ENCODE measurements at regions of chr12 and their contacts with region 1.

Region 1: GRCh38 chr12:101299931-101300330 is 20.0 kb downstream of the UTP20 start:
- DNase-seq: no peak
- ATAC-seq: no peak
- H3K4me3 ChIP-seq: no peak overlapping the region
- H3K27ac ChIP-seq: no peak overlapping the region
- H3K4me1 ChIP-seq: no peaks in the 10 kb centered on the region
- H3K27me3 ChIP-seq: no peaks in the 10 kb centered on the region
- CTCF ChIP-seq: no peak

Region 2: GRCh38 chr12:101356794-101357193 is 56.9 kb after region 1 on chr12:
- intact Hi-C with region 1: loop called (anchors 10 kb)
- DNase-seq: no peak
- ATAC-seq: no peak
- H3K4me3 ChIP-seq: no peak overlapping the region
- H3K27ac ChIP-seq: no peak overlapping the region
- H3K4me1 ChIP-seq: no peaks in the 10 kb centered on the region
- H3K27me3 ChIP-seq: no peaks in the 10 kb centered on the region
- CTCF ChIP-seq: no peak

Measured in psoas muscle (tissue), 8 donors.